GM18951 (cell line): ENCODE measurements at regions of chr2 and their contacts with region 1.

Region 1: DNA sequence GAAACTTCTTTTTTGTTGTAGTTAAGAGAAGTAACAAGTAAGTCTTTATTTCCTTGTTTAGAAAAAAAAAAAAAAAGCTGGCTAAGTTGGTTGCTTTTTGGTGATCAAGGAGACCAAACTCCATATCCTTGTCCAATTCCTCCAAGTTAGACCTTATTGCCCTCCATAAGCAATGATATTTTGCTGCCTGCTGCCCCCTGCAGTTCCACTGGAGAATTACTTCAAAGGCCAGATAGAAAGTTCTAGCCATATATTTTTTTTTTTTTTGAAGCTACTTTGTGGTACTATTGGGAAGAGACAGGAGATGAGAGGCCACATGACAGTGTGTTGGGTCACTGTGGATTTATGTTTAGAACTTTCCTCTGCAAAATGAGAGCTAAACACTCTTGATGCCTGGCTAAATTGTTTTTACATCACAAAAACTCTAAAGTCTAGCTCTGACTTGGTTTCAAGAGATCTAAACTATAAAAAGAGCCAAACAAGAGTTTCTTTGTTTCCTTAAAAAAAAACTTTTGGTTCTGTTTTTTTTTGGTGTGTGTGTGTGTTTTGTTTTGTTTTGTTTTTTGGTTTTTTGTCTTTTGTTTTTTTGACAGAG is 80.7 kb upstream of the RASGRP3 start:
- POLR2A ChIP-seq: no peak

Region 2: DNA sequence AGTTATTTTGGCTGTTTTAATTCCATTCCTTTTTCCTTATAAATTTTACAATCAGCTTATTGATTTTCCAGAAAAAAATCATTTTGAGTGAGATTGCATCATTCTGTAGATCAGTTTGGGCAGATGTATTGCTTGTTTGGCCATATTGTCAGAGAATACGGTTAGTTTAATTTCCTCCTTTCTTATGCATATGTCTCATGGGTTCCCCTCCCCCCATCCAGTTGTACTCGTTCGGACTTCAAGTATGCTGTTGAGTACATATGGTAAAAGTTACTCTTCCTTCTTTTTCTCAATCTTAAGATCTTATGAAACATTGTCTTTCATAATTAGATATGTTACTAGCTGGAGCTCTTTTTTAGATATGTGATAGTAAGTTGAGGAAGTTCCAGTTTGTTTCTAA is 899.1 kb before region 1 on chr2:
- in situ Hi-C with region 1: no loop called
- POLR2A ChIP-seq: no peak

Region 3: DNA sequence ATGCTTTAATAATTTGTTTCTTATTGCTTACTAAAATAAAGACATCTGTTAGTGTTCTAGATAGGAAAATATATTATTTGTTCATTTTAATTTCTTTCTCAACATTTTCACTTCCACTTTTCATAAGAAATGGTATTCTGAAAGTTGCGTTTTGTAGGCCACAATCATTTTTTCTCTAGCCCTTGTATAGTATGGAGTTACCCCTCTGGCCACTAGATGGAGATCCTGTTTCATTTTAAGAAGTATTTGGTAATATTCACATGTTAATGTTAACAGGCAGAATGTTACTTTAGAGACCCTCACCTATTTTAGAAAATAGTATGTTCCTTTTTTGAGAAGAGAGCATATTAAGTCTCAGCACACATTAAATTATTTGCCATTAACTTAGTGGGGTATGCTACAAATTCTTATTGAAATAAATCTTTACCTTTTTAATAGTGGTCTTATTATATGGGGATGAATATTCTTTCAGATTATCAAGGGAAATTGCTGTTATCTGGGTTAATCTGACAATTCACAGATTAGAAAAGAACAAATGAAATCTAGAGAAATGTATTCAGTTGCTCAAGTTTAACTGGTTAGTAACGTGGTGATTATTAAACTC is 841.8 kb before region 1 on chr2:
- in situ Hi-C with region 1: loop called (anchors 25 kb)
- POLR2A ChIP-seq: no peak

Region 4: DNA sequence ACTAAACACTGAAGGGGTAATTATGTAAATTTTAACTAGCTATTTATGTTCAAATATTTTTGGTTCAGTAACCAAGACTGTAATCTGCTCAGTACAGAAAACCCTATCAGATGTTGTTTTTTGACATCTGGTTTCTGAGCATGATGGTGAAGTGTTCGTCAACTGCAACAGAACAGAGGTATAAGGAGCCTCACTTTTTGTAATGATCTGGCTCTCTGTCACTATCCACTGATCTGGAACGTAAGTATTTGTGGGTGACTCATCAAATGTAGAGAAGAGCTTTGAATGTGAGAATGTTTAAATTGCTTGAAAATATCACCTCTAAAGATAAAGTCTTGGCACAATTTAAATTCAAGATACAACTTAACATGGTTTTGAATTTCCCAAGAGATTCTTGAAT is 417.0 kb after region 1 on chr2:
- in situ Hi-C with region 1: no loop called
- POLR2A ChIP-seq: no peak